Activated CD8-positive, alpha-beta memory T cell treated with anti-CD3 and anti-CD28 coated beads, Interleukin-2, amount 10 ng/mL, durations not matched to agents 7 days and 5 days (primary cell): ENCODE measurements at regions of chr9 and their contacts with region 1.

Region 1: GRCh38 chr9:15135164-15135792 is 171.7 kb downstream of the TTC39B start:
- DNase-seq: peak; percentile 51
- ATAC-seq: peak; percentile 77
- H3K4me3 Mint-ChIP-seq: no peak overlapping the region
- H3K27ac Mint-ChIP-seq: no peak overlapping the region
- H3K4me1 Mint-ChIP-seq: peaks cover 10% of the 10 kb centered on the region
- H3K27me3 Mint-ChIP-seq: peaks cover 7% of the 10 kb centered on the region

Region 2: DNA sequence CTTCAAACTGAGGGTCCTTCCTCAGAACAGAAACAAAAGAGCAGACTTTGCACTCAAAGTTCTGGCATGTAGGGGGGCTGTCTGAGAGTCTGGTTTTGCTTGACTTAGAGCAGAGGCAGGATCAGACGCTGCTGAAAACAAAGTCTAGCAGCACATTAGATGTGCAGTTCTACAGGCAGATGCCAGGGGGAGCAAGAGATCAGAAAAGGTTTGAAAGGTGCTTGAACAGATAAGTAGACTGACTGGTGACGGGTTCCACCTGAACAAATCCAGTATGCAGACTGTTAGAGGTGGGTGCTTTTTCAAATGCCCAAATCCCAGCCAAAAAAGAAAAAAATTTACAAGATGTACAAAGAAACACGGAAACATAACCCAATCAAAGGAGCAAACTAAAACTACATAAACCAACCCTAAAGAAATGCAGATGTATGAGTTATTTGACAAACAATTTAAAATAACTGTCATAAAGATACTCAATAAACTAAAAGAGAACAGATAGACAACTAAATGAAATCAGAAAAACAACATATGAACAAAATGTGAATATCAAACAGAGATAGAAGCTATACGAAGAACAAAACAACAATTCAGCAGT is 30.4 kb before region 1 on chr9:
- CTCF ChIA-PET with region 1: interaction called, 21 read pairs
- DNase-seq: peak; percentile 47
- ATAC-seq: peak; percentile 71
- H3K4me3 Mint-ChIP-seq: no peak overlapping the region
- H3K27ac Mint-ChIP-seq: no peak overlapping the region
- H3K4me1 Mint-ChIP-seq: no peaks in the 10 kb centered on the region
- H3K27me3 Mint-ChIP-seq: peaks cover 12% of the 10 kb centered on the region